Thyroid gland (tissue), 4 donors: ENCODE measurements at regions of chr4 and their contacts with region 1.

Region 1: DNA sequence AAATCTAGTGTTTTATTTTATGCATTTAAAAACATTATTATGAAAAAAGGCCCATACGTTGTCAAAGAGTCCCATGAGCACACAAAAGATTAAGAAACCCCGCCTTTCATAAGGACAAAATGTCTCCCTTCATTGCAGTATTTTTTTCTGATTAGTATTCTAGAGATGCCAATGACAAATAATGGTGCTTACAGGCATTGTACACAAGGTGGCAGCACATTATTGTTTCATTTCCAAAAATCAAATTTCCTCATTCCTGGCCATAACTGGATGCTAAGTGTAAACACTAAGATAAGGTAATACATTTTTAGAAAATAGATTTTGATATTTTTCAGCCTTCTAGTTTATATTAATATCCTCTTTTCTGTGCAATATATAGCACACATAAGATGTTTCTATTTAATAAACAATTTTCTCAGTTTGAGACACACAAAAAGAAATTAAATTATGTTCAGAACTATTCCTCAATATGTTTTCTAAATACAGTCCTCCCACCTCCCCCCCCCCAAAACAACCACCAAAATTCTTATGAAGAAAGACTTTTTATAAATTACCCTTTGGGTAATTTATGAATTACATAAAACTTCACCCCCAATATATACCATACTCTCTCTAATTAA is 47.7 kb downstream of the TIGD2 start:
- DNase-seq: no peak
- H3K4me3 ChIP-seq: no peak overlapping the region
- H3K27ac ChIP-seq: no peak overlapping the region
- H3K4me1 ChIP-seq: peaks cover 3 to 9% of the 10 kb centered on the region in 2 donors
- H3K27me3 ChIP-seq: no peaks in the 10 kb centered on the region
- CTCF ChIP-seq: peak; percentile 41 to 84 (median 66)
- POLR2A ChIP-seq: no peak

Region 2: DNA sequence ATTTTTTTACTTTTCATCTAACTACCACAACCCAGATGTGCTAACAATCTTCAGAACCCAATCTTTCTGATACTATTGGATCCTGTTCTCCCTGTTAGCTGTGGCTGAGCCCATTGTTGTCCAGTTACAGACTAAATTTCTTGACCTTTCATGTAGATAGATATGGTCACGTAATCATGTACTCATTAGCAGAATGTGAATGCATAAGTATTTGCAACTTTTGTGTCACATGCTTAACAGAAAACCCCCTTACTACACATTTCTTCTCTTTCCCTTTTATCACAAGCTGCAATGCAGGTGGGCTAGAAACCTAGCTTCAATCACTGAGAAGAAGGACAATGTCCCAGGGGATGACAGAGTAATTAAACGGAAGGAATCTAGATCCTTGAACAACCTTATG is 89.0 kb before region 1 on chr4:
- intact Hi-C with region 1: no loop called
- DNase-seq: no peak
- H3K4me3 ChIP-seq: no peak overlapping the region
- H3K27ac ChIP-seq: no peak overlapping the region
- H3K4me1 ChIP-seq: no peaks in the 10 kb centered on the region
- H3K27me3 ChIP-seq: no peaks in the 10 kb centered on the region
- CTCF ChIP-seq: no peak
- POLR2A ChIP-seq: no peak

Region 3: DNA sequence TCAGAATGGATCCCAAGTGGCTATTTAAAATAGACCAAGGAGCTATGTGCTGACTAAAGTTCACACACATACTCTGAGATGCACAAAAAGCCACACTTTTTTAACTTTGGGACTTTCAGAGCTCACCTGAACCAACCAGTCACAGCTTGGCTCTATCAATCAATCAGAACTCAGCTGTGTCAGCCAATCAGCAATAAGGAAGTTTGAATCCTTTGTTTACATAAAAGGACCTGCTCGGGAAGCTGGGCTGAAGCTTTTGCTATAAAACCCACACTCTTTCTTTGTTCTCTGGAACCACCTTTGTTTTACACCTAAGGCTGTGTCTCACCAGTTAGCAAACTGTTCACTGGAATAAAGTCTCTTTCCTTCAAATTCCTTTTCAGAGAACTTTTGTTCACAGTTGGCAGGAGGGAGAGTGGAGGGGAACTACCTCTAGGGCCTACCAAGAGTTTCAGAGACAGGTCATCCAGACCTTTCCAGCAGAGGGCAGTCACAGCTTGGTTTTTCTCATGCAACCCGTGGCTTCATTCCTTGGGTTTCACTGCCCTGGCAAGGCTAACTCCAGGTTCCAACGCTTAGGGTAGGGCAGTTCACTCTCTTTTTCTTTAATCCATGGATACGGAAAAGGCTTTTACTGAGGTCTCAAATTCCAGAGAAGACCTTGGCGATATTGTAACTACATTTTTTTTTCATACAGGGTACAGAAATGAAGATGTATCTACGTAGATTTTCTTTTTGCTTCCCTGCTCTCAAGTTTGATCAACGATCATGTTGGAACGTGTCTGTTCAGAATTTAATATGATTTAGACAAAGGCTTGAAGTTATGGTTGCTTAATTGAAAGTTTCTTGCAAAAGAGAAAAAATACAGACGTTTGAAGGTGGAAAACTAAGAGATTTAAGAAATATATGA is 67.9 kb after region 1 on chr4:
- intact Hi-C with region 1: loop called (anchors 5 kb)
- DNase-seq: peak; percentile 88 to 89
- H3K4me3 ChIP-seq: no peak overlapping the region
- H3K27ac ChIP-seq: peak overlapping the region in 1 of 3 donors; percentile 40
- H3K4me1 ChIP-seq: peaks cover 0 to 10% of the 10 kb centered on the region in 2 donors
- H3K27me3 ChIP-seq: no peaks in the 10 kb centered on the region
- CTCF ChIP-seq: peak; percentile 45 to 88 (median 66)
- POLR2A ChIP-seq: no peak

Region 4: DNA sequence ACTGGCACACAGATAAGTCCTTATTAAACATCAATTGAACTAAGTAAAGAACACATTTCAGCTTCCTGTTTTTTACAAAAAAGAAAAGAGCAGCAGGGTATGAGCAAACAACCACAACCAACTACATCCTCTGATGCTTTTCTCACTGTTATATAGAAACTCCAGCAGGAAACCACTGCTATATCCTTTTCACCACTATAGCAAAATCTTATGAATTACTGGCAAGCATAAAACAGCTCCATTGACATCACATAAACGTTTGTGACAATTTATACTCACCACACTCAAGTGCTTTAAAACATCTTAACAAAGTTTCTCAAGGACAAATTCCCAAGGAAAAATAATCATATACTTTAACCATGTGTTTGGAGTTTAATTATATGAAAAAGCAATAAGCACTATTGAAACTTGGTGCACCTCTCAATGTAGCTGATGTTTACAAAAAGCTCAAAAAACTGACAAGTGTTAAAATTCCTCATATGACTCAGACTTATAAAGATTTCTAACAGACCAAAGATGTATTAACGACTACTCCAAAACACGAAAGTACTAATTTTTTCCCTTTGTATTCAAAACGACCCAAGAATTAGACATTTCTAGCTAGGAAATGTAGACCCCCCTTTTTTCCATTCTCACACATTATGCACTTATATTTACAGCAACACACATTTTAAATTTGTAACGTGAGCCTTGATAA is 135.7 kb after region 1 on chr4:
- intact Hi-C with region 1: no loop called
- DNase-seq: no peak
- H3K4me3 ChIP-seq: no peak overlapping the region
- H3K27ac ChIP-seq: no peak overlapping the region
- H3K4me1 ChIP-seq: no peaks in the 10 kb centered on the region
- H3K27me3 ChIP-seq: no peaks in the 10 kb centered on the region
- CTCF ChIP-seq: no peak
- POLR2A ChIP-seq: no peak

Region 5: DNA sequence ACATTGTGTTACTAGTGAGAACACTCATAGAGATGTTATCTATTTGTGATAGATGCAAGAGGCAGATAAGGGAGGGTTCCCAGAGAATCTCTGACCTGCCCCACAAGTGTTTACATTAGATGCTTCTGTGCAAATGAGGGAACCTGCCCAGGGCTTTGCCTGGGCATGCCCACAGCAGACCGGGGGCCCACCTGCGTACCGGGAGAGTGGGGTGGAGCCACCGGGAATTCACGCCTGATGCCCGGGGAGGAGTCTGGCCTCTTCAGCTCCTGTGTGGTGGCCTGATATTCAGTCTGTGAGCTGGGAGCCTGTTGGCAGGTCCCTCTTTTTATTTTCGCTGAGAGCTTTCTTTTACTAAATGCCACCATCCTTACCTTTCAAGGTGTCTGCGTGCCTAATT is 522.2 kb after region 1 on chr4:
- intact Hi-C with region 1: no loop called
- DNase-seq: no peak
- H3K4me3 ChIP-seq: no peak overlapping the region
- H3K27ac ChIP-seq: no peak overlapping the region
- H3K4me1 ChIP-seq: no peaks in the 10 kb centered on the region
- H3K27me3 ChIP-seq: no peaks in the 10 kb centered on the region
- CTCF ChIP-seq: no peak
- POLR2A ChIP-seq: no peak